ENCODE measurements at regions of chr17 and their contacts with region 1.

Region 1: DNA sequence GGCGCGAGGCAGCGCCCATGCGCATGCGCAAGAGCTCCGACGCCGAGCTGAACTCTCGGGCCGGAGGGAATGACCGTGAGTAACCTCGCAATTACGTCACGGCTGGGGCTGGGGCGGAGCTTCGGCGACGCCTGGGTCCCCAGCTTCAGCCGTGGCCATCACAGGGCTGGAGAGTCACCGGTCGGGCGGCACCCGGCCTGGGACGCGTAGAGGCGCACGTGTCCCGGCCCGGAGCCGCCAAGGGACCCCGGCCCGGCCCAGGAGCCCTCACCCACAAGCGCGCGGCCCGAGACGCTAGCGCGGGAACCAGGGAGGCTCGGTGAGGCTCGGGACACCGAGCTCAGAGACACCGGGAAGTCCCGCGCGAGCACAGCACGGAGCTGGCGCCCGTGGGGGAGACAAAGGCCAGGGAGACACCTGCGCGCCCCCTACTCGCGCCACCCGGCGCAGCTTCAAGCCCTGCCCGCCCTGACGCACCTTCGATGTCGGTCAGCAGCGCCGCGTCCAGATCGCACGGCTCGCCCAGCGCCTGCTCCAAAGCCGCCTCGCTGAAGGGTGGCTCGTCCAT is 452 bp downstream of the SREBF1 start:
- DNase-seq: peak; percentile 98

Region 2: DNA sequence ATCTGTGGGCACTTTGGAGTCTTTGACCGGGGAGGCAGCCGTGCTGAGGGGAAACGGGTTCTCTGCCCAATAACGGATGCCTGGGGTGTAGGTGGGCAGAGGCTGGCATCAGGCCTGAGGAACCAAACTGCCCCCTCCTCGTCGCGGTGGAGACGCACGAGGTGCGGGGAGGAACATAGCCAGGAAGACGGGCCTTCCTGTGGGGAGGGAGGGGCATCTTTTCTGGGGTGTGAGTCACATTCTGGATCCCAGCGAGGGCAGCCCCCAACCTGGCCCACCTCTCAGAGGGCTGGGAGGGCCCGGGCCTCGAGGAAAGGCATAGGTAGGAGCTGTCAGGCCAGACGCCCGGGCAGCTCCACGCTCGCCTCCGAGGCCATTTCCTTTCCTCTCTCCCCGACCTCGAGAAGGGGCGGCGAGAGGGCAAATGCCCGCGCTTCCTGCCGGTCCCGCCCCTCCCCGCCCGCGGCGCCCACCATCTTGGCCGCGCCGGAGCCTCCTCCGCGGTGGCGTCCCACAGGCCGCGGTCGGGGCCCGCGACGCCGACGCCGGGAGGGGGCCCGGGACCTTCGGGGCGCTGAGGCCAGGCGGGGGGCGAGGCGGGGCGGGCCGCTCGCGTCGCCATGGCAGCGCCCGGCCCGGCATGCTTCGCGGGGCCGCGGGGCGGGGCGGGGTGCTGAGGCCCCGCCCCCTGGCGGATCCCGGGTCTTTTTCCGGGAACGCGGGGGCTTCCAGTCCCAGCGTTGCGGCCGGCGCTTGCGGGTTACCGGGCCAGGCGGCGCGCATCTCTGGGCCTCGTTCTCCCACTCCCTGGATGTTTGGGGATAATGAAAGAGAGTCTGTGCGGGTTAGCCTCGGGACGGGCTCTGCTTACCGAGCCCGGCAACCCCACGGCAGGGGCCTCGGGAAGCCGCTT is 141.9 kb before region 1 on chr17:
- CTCF ChIA-PET with region 1: no interaction called
- POLR2A ChIA-PET with region 1: interaction called, 14 read pairs
- DNase-seq: peak; percentile 82

Region 3: GRCh38 chr17:17729620-17730249 is 106.6 kb before region 1 on chr17:
- CTCF ChIA-PET with region 1: no interaction called
- POLR2A ChIA-PET with region 1: no interaction called
- DNase-seq: peak; percentile 39

Region 4: DNA sequence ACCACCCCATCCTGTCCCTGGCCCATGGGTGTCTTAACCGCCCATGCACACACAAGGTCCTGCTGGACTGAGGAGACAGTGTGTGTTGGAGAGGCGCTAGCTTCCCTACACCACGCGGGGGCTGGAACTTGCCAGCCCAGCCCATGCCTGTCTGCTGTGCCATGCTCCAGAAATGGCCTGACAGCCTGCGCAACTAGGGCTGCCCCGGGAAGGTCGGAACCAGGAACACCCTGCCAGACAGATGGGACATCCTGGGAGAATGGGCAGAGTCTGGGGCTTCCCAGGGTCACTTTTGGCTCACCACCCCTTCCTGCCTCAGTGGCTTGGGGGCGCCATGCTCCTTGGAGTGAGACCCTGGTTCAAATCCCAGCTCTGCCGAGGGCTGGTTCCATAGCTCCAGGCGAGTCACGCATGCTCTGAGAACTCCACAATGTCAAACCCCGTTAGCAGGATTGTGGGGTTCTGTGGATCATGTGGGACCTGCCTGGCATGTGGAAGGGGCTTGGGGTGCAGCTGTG is 35.8 kb before region 1 on chr17:
- CTCF ChIA-PET with region 1: no interaction called
- POLR2A ChIA-PET with region 1: interaction called, 369 read pairs
- DNase-seq: no peak

Region 5: GRCh38 chr17:17849845-17850373 is 13.6 kb after region 1 on chr17:
- CTCF ChIA-PET with region 1: interaction called, 3 read pairs
- POLR2A ChIA-PET with region 1: interaction called, 196 read pairs
- DNase-seq: peak; percentile 70

Region 6: GRCh38 chr17:17877529-17878358 is 41.4 kb after region 1 on chr17:
- CTCF ChIA-PET with region 1: no interaction called
- POLR2A ChIA-PET with region 1: interaction called, 16 read pairs
- DNase-seq: peak; percentile 57

Region 7: DNA sequence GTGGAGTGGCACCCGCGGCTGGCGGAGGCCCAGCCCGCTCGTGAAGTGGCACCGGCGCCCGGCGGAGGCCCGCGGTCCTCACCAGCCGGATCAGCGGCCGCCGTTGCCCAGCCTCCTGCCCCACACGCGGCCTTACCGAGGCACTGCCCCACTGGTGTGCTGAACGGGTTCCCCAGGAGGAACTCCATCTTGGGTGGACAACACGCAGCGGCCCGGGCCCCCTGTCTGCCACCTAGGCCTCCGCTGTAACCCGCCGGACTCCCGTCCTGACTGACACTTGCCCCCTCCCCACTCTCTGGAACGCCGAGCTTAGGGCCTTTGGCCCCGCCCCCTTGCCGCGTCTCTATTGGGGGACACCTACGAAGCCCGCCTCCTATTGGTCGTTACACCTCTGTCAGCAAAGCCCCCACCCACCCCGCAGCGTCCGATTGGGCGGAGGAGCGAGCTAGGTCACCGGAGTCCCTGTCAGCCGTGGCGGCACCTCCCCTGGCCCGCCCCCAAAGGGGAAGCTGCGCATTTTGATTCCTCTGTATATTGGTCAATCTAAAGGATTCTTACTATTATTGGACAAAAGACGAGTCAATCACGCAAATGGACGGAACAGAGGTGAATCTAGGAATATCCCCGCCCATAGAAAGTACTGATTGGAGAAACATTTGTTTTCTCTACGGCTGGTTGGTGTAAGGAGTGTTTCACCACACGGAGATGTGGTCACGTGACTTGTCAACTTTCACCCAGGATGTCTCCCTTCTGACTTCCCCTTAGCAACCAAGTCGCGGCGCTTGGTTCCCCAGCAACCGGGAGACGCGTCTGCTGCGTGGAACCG is 136.0 kb after region 1 on chr17 and contains the starts of genes DRC3 and TOM1L2:
- CTCF ChIA-PET with region 1: no interaction called
- POLR2A ChIA-PET with region 1: interaction called, 14 read pairs
- DNase-seq: peak; percentile 99